ENCODE measurements at regions of chr18 and their contacts with region 1.

Region 1: GRCh38 chr18:61502472-61502871 is 169.2 kb downstream of the CDH20 start:
- DNase-seq: peak; percentile 5
- ATAC-seq: peak; percentile 66
- H3K4me3 ChIP-seq: no peak overlapping the region
- H3K27ac ChIP-seq: no peak overlapping the region
- H3K4me1 ChIP-seq: no peaks in the 10 kb centered on the region
- H3K27me3 ChIP-seq: no peaks in the 10 kb centered on the region
- CTCF ChIP-seq: peak; percentile 57 to 64 (median 61); a peak in 5 of 6 replicates
- EP300 ChIP-seq: no peak
- POLR2A ChIP-seq: no peak
- RAD21 ChIP-seq: peak; percentile 71

Region 2: DNA sequence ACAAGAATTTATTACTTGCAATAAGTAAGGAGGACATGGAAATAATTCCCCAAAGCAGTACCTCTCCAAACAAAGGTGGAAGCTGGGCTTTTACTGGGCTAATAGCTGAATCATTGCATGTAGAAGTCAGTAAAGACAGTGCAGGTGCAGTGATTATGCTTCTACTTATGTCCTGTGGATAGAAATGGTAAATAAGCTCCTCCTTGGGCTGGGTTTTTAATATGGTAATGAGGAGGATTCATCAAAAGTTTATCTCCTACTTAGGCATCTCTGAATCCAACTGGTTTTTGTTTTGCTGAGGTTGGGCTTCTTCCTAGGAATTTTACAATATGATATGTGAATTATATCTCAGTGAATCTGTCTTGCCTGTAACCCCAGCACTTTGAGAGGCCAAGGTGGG is 832.5 kb before region 1 on chr18:
- CTCF ChIA-PET with region 1: no interaction called
- POLR2A ChIA-PET with region 1: no interaction called
- RAD21 ChIA-PET with region 1: no interaction called
- SMC1A ChIA-PET with region 1: no interaction called
- in situ Hi-C with region 1: no loop called
- intact Hi-C with region 1: loop called (anchors 5 kb)
- DNase-seq: no peak
- ATAC-seq: no peak
- H3K4me3 ChIP-seq: no peak overlapping the region
- H3K27ac ChIP-seq: no peak overlapping the region
- H3K4me1 ChIP-seq: no peaks in the 10 kb centered on the region
- H3K27me3 ChIP-seq: no peaks in the 10 kb centered on the region; a peak in 1 of 4 replicates
- CTCF ChIP-seq: no peak
- EP300 ChIP-seq: no peak
- POLR2A ChIP-seq: no peak
- RAD21 ChIP-seq: no peak

Region 3: GRCh38 chr18:60684843-60685513 is 817.5 kb before region 1 on chr18:
- CTCF ChIA-PET with region 1: interaction called, 4 read pairs
- POLR2A ChIA-PET with region 1: no interaction called
- RAD21 ChIA-PET with region 1: interaction called, 4 read pairs
- SMC1A ChIA-PET with region 1: no interaction called
- in situ Hi-C with region 1: no loop called
- intact Hi-C with region 1: loop called (anchors 1 kb)
- DNase-seq: no peak
- ATAC-seq: peak; percentile 56; the same call in 2 of the 3 replicates
- H3K4me3 ChIP-seq: no peak overlapping the region
- H3K27ac ChIP-seq: no peak overlapping the region
- H3K4me1 ChIP-seq: no peaks in the 10 kb centered on the region
- H3K27me3 ChIP-seq: no peaks in the 10 kb centered on the region; a peak in 1 of 4 replicates
- CTCF ChIP-seq: peak in 2 of 3 experiments; percentile 48 to 51; a peak in 3 of 6 replicates
- EP300 ChIP-seq: no peak
- POLR2A ChIP-seq: no peak
- RAD21 ChIP-seq: peak; percentile 58

Region 4: DNA sequence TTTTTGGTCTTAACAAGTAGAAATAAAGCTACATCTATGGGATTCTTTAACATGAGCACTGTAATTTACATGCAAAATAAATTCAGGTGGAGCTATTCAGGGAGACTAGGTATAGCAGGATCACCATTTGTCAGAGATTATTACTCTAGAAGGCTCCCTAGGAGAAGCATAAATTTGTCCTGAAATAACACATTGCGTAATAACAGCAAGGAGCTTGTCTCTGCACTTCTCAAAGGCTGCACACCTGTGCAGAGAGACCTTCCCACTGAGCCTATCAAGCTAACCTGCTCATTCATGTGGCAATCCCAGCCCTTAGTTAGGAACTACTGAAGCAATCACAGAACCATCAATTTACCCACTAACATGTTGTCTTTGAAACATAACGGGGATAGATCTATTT is 692.5 kb before region 1 on chr18:
- CTCF ChIA-PET with region 1: interaction called, 5 read pairs
- POLR2A ChIA-PET with region 1: no interaction called
- RAD21 ChIA-PET with region 1: no interaction called
- SMC1A ChIA-PET with region 1: interaction called, 5 read pairs
- in situ Hi-C with region 1: no loop called
- intact Hi-C with region 1: loop called (anchors 5 kb)
- DNase-seq: no peak
- ATAC-seq: no peak
- H3K4me3 ChIP-seq: no peak overlapping the region
- H3K27ac ChIP-seq: no peak overlapping the region
- H3K4me1 ChIP-seq: no peaks in the 10 kb centered on the region
- H3K27me3 ChIP-seq: no peaks in the 10 kb centered on the region
- CTCF ChIP-seq: no peak
- EP300 ChIP-seq: no peak
- POLR2A ChIP-seq: no peak
- RAD21 ChIP-seq: no peak

Region 5: DNA sequence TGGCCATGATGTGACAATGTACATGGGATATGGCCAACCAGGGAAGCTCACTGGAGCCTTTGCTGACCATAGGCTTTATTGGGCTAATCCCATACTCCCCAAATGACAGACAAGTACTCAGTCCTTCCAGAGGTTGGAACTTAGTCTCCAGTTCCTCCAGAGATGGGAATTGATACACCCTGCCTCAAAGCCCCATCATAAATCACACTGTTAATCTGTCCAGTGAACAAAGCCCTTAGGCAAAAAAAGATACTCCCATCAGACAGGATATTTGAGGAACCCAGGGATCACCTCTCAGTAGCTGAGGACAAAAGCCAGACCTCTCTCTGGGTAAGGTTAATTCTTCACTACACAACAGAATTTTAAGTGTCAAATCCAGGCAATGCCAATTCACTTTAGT is 416.7 kb before region 1 on chr18:
- CTCF ChIA-PET with region 1: interaction called, 16 read pairs
- POLR2A ChIA-PET with region 1: no interaction called
- RAD21 ChIA-PET with region 1: interaction called, 6 read pairs
- SMC1A ChIA-PET with region 1: interaction called, 3 read pairs
- in situ Hi-C with region 1: loop called (anchors 10 kb)
- intact Hi-C with region 1: loop called (anchors 1 kb)
- DNase-seq: no peak
- ATAC-seq: no peak
- H3K4me3 ChIP-seq: no peak overlapping the region
- H3K27ac ChIP-seq: no peak overlapping the region
- H3K4me1 ChIP-seq: no peaks in the 10 kb centered on the region
- H3K27me3 ChIP-seq: no peaks in the 10 kb centered on the region
- CTCF ChIP-seq: no peak
- EP300 ChIP-seq: no peak
- POLR2A ChIP-seq: no peak
- RAD21 ChIP-seq: no peak

Region 6: GRCh38 chr18:61322265-61322873 is 180.1 kb before region 1 on chr18:
- CTCF ChIA-PET with region 1: interaction called, 185 read pairs
- POLR2A ChIA-PET with region 1: no interaction called
- RAD21 ChIA-PET with region 1: interaction called, 38 read pairs
- SMC1A ChIA-PET with region 1: interaction called, 19 read pairs
- in situ Hi-C with region 1: loop called (anchors 5 kb)
- intact Hi-C with region 1: loop called (anchors 1 kb)
- DNase-seq: no peak
- ATAC-seq: peak; percentile 99
- H3K4me3 ChIP-seq: no peak overlapping the region
- H3K27ac ChIP-seq: no peak overlapping the region
- H3K4me1 ChIP-seq: no peaks in the 10 kb centered on the region
- H3K27me3 ChIP-seq: no peaks in the 10 kb centered on the region
- CTCF ChIP-seq: peak; percentile 84 to 88 (median 87)
- EP300 ChIP-seq: no peak
- POLR2A ChIP-seq: no peak
- RAD21 ChIP-seq: peak; percentile 88

Region 7: GRCh38 chr18:61551586-61551985 is 49.1 kb after region 1 on chr18:
- CTCF ChIA-PET with region 1: no interaction called
- POLR2A ChIA-PET with region 1: no interaction called
- RAD21 ChIA-PET with region 1: no interaction called
- SMC1A ChIA-PET with region 1: no interaction called
- in situ Hi-C with region 1: no loop called
- intact Hi-C with region 1: no loop called
- DNase-seq: peak; percentile 7
- ATAC-seq: peak; percentile 80
- H3K4me3 ChIP-seq: no peak overlapping the region
- H3K27ac ChIP-seq: no peak overlapping the region
- H3K4me1 ChIP-seq: no peaks in the 10 kb centered on the region
- H3K27me3 ChIP-seq: no peaks in the 10 kb centered on the region
- CTCF ChIP-seq: peak; percentile 58 to 75 (median 67)
- EP300 ChIP-seq: no peak
- POLR2A ChIP-seq: no peak
- RAD21 ChIP-seq: peak; percentile 57

Region 8: DNA sequence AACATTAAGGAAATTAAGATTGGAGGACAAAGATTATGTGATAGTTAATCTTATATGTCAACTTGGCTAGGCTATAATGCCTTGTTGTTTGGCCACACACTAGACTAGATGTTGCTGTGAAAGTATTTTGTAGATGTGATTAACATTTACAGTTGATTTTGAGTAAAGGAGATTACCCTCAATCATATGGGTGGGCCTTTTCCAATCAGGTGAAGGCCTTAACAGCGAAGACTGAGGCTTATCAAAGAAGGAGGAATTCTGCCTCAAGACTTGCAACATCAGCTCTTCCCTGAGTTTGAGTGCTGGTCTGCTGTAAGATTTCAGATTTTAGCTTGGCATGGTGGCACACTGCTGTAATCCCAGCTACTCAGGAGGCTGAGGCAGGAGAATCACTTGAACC is 81.1 kb after region 1 on chr18:
- CTCF ChIA-PET with region 1: no interaction called
- POLR2A ChIA-PET with region 1: no interaction called
- RAD21 ChIA-PET with region 1: no interaction called
- SMC1A ChIA-PET with region 1: no interaction called
- in situ Hi-C with region 1: no loop called
- intact Hi-C with region 1: no loop called
- DNase-seq: no peak
- ATAC-seq: no peak
- H3K4me3 ChIP-seq: no peak overlapping the region
- H3K27ac ChIP-seq: no peak overlapping the region
- H3K4me1 ChIP-seq: no peaks in the 10 kb centered on the region
- H3K27me3 ChIP-seq: no peaks in the 10 kb centered on the region
- CTCF ChIP-seq: no peak
- EP300 ChIP-seq: no peak
- POLR2A ChIP-seq: no peak
- RAD21 ChIP-seq: no peak

Region 9: GRCh38 chr18:61596296-61596695 is 93.8 kb after region 1 on chr18:
- CTCF ChIA-PET with region 1: no interaction called
- POLR2A ChIA-PET with region 1: no interaction called
- RAD21 ChIA-PET with region 1: no interaction called
- SMC1A ChIA-PET with region 1: no interaction called
- in situ Hi-C with region 1: no loop called
- intact Hi-C with region 1: no loop called
- DNase-seq: no peak
- ATAC-seq: no peak
- H3K4me3 ChIP-seq: no peak overlapping the region
- H3K27ac ChIP-seq: no peak overlapping the region
- H3K4me1 ChIP-seq: no peaks in the 10 kb centered on the region
- H3K27me3 ChIP-seq: no peaks in the 10 kb centered on the region
- CTCF ChIP-seq: no peak
- EP300 ChIP-seq: no peak
- POLR2A ChIP-seq: no peak
- RAD21 ChIP-seq: no peak

Measured in GM12878 (cell line).